ENCODE measurements at regions of chr1 and their contacts with region 1.

Region 1: GRCh38 chr1:94801919-94802546 is 18.1 kb upstream of the SLC44A3 start:
- DNase-seq: peak; percentile 68
- ATAC-seq: peak; percentile 88
- H3K4me3 ChIP-seq: peak overlapping the region; percentile 36 to 52
- H3K27ac ChIP-seq: peak overlapping the region; percentile 54
- H3K4me1 ChIP-seq: peaks cover 6 to 66% of the 10 kb centered on the region in 2 experiments
- H3K27me3 ChIP-seq: no peaks in the 10 kb centered on the region
- CTCF ChIP-seq: peak; percentile 47 to 95 (median 59)
- POLR2A ChIP-seq: no peak
- RAD21 ChIP-seq: peak; percentile 98

Region 2: GRCh38 chr1:94025383-94026340 is 776.4 kb before region 1 on chr1:
- CTCF ChIA-PET with region 1: interaction called, 4 read pairs
- POLR2A ChIA-PET with region 1: no interaction called
- RAD21 ChIA-PET with region 1: no interaction called
- intact Hi-C with region 1: loop called (anchors 10 kb)
- DNase-seq: peak; percentile 65
- ATAC-seq: peak; percentile 83
- H3K4me3 ChIP-seq: peak overlapping the region; percentile 34 to 54
- H3K27ac ChIP-seq: no peak overlapping the region
- H3K4me1 ChIP-seq: peaks cover 0 to 19% of the 10 kb centered on the region in 2 experiments; a peak in 2 of 4 replicates
- H3K27me3 ChIP-seq: no peaks in the 10 kb centered on the region
- CTCF ChIP-seq: peak; percentile 66 to 94 (median 84)
- POLR2A ChIP-seq: no peak
- RAD21 ChIP-seq: peak; percentile 84

Region 3: GRCh38 chr1:94481473-94481933 is 320.5 kb before region 1 on chr1:
- CTCF ChIA-PET with region 1: interaction called, 17 read pairs
- POLR2A ChIA-PET with region 1: no interaction called
- RAD21 ChIA-PET with region 1: interaction called, 3 read pairs
- intact Hi-C with region 1: loop called (anchors 1 kb)
- DNase-seq: peak; percentile 69
- ATAC-seq: peak; percentile 99
- H3K4me3 ChIP-seq: no peak overlapping the region
- H3K27ac ChIP-seq: no peak overlapping the region
- H3K4me1 ChIP-seq: peaks cover 0 to 8% of the 10 kb centered on the region in 2 experiments; a peak in 2 of 4 replicates
- H3K27me3 ChIP-seq: no peaks in the 10 kb centered on the region
- CTCF ChIP-seq: peak; percentile 69 to 91 (median 89)
- POLR2A ChIP-seq: no peak
- RAD21 ChIP-seq: peak; percentile 73

Region 4: GRCh38 chr1:94522304-94522703 is 279.7 kb before region 1 on chr1:
- CTCF ChIA-PET with region 1: interaction called, 23 read pairs
- POLR2A ChIA-PET with region 1: no interaction called
- RAD21 ChIA-PET with region 1: no interaction called
- intact Hi-C with region 1: loop called (anchors 1 kb)
- DNase-seq: peak; percentile 45
- ATAC-seq: peak; percentile 74
- H3K4me3 ChIP-seq: no peak overlapping the region
- H3K27ac ChIP-seq: no peak overlapping the region
- H3K4me1 ChIP-seq: peaks cover 0 to 2% of the 10 kb centered on the region in 2 experiments; a peak in 2 of 4 replicates
- H3K27me3 ChIP-seq: no peaks in the 10 kb centered on the region
- CTCF ChIP-seq: peak; percentile 40 to 87 (median 65); a peak in 5 of 6 replicates
- POLR2A ChIP-seq: no peak
- RAD21 ChIP-seq: peak; percentile 90

Region 5: GRCh38 chr1:94541175-94542087 is 260.6 kb before region 1 on chr1 and contains the start of gene F3:
- CTCF ChIA-PET with region 1: no interaction called
- POLR2A ChIA-PET with region 1: no interaction called
- RAD21 ChIA-PET with region 1: no interaction called
- intact Hi-C with region 1: loop called (anchors 5 kb)
- DNase-seq: peak; percentile 70
- ATAC-seq: peak; percentile 87
- H3K4me3 ChIP-seq: peak within 1 kb of the TSS; percentile 76
- H3K27ac ChIP-seq: peak within 1 kb of the TSS; percentile 84
- H3K4me1 ChIP-seq: peaks cover 13 to 59% of the 10 kb centered on the region in 2 experiments; a peak in 3 of 4 replicates
- H3K27me3 ChIP-seq: no peaks in the 10 kb centered on the region
- CTCF ChIP-seq: no peak
- POLR2A ChIP-seq: peak; percentile 78
- RAD21 ChIP-seq: no peak; the same call in 1 of the 2 replicates
- total RNA-seq, gene F3: 58.5 TPM

Region 6: GRCh38 chr1:94622757-94623156 is 179.3 kb before region 1 on chr1:
- CTCF ChIA-PET with region 1: no interaction called
- POLR2A ChIA-PET with region 1: no interaction called
- RAD21 ChIA-PET with region 1: no interaction called
- intact Hi-C with region 1: loop called (anchors 5 kb)
- DNase-seq: peak; percentile 57
- ATAC-seq: peak; percentile 76
- H3K4me3 ChIP-seq: peak overlapping the region in 1 of 2 experiments; percentile 3; a peak in 1 of 4 replicates
- H3K27ac ChIP-seq: peak overlapping the region; percentile 70
- H3K4me1 ChIP-seq: peaks cover 49 to 66% of the 10 kb centered on the region in 2 experiments
- H3K27me3 ChIP-seq: no peaks in the 10 kb centered on the region
- CTCF ChIP-seq: no peak
- POLR2A ChIP-seq: no peak
- RAD21 ChIP-seq: 0 out of 2 replicates have a peak, but pooled peaks have one; percentile 41